ENCODE measurements at regions of chr5 and their contacts with region 1.

Region 1: DNA sequence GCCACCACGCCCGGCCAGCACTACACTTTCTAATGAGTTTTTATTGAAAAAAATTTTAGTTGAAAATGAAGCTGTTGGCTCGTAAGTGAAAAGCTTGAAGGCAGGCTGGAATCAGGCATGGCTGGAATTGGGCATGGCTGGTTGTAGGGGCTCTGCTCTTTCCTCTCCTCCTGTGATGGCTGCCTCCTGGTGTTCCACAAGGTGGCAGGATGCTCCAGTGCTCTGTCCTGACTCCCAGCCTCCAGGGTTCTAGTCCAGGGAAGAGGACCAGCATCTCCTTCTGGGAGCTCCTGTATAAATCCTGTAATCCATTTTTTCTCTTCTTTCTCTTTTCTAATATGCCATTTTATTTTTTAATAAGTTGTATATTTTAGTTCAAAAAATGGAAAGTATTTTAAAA is 57.2 kb upstream of the DHFR start:
- DNase-seq: peak; percentile 37
- ATAC-seq: peak; percentile 69
- H3K4me3 ChIP-seq: no peak overlapping the region
- H3K27ac ChIP-seq: no peak overlapping the region
- H3K4me1 ChIP-seq: no peaks in the 10 kb centered on the region
- H3K27me3 ChIP-seq: no peaks in the 10 kb centered on the region
- CTCF ChIP-seq: peak; percentile 52

Region 2: DNA sequence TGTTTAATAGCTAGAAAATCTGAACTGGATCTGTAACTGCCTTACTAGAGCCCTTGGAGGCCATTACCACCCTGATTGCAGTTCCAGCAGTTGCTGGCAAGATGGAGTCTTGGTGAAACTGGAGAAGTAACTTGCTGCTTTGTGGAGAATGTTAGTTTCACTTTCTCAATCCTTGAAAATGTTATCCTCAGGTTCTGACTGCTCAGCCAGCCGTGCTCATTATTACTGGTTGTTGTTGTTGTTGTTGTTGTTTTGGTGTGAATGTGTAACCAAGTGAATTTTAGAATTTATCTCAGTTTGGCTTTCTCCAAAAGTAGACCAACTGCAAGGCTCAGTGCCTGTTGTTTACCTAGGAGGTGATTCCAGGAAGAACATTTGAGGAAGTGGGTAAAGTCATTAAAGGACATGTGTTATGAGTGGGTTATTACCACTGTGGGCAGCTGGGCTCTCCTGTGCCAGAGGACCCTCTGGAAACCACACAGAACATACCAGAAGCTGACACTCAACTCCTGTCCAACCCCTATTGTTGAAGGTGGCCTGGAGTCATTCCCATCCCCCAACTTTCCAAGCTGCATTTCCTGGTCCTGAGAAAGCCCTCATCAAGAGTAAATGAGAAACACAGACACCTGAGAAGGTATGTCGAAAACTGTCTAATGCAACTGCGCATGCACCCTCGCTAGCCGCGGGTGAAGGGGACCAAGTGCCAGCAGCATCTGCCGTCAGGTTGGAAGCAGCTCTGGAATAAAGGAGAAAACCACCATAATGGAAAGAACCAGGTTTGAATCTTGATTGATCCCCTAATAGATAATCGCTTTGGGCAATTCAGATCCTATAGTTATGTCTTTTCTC is 910.7 kb before region 1 on chr5:
- CTCF ChIA-PET with region 1: no interaction called
- POLR2A ChIA-PET with region 1: no interaction called
- intact Hi-C with region 1: no loop called
- DNase-seq: no peak
- ATAC-seq: no peak
- H3K4me3 ChIP-seq: no peak overlapping the region
- H3K27ac ChIP-seq: no peak overlapping the region
- H3K4me1 ChIP-seq: no peaks in the 10 kb centered on the region
- H3K27me3 ChIP-seq: no peaks in the 10 kb centered on the region
- CTCF ChIP-seq: no peak

Region 3: GRCh38 chr5:81006947-81007636 is 295.2 kb after region 1 on chr5:
- CTCF ChIA-PET with region 1: no interaction called
- POLR2A ChIA-PET with region 1: interaction called, 13 read pairs
- intact Hi-C with region 1: no loop called
- DNase-seq: no peak
- ATAC-seq: no peak
- H3K4me3 ChIP-seq: no peak overlapping the region
- H3K27ac ChIP-seq: no peak overlapping the region
- H3K4me1 ChIP-seq: no peaks in the 10 kb centered on the region
- H3K27me3 ChIP-seq: no peaks in the 10 kb centered on the region
- CTCF ChIP-seq: no peak

Region 4: DNA sequence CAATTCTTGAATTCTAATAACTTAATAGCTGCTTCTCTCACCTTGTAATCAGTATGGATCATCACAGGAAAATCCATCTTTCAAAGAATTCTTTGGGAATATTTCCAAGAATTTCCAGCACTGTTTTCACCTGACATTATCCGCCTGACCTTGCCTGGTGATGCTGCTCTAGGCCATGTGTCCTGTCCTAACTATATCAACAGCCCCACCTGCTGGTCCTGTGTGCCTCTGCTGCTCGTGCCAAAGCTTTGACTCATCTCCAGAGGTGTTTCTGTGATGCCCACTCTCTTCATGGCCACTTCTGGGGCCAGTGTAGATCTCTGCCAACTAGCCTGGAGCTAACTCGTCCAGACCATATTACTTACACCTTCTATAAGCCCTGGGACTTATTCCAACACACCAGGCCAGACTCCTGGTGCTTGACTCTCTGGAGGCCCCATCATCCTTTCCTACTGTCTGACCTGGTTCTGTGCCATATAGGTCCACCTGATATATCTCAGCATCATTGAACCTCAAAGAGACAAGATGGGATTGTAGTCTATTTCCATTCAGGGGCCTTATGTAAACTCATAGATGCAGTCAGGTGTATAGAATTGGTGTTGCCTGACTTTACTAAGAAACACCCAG is 453.7 kb after region 1 on chr5:
- CTCF ChIA-PET with region 1: interaction called, 3 read pairs
- POLR2A ChIA-PET with region 1: no interaction called
- intact Hi-C with region 1: loop called (anchors 10 kb)
- DNase-seq: peak; percentile 75
- ATAC-seq: peak; percentile 98
- H3K4me3 ChIP-seq: no peak overlapping the region
- H3K27ac ChIP-seq: no peak overlapping the region
- H3K4me1 ChIP-seq: no peaks in the 10 kb centered on the region
- H3K27me3 ChIP-seq: no peaks in the 10 kb centered on the region
- CTCF ChIP-seq: peak; percentile 81

Measured in PC-3 (cell line).